CD4-positive, alpha-beta memory T cell (primary cell): ENCODE measurements at regions of chr20 and their contacts with region 1.

Region 1: DNA sequence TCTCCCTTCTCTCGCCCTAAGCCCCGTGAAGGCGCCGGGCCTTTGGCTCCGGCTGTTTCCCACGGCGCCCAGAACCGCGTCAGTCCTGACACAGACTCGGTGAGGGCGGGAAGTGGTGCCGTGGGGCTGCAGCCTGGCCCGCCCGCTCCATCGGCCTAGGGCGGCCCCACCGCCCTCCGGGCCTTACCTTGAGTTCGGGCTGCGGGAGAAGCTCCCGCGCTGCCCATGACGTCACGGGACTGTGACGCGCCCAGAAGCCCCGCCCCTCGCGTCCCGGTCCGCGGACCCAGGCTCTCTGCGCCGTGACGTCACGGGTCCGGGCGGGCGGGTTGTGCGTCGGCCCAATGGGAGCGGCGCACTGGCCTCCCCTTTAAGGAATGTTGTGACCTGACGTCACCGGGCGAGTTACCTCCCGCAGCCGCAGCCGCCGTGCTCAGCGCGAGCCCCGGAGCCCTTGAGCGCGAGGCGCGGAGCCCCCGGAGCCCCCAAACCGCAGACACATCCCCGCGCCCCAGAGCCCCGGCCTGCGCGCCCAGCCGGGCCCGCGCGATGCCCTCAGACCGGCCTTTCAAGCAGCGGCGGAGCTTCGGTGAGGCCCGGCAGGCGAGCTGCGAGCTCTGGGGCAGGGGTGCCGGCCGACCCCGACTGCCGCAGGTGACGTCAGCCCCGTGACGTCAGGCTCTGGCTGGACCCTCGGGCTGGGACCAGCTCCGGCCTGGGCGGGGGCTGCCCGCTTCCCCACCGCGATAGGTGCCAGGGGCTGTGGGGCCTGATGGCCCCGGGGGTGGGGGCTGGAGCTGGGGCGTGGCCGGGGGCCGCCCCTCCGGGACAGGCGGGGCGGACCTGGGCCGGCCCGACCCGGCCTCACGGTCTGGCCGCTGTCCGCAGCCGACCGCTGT is at the start of gene MAP1LC3A:
- DNase-seq: peak; percentile 93 to 96 (median 94)
- H3K4me3 ChIP-seq: peak within 1 kb of the TSS; percentile 45 to 46
- H3K4me3 Mint-ChIP-seq: peak within 1 kb of the TSS; percentile 70 to 93 (median 84)
- H3K27ac ChIP-seq: peak within 1 kb of the TSS; percentile 95
- H3K27ac Mint-ChIP-seq: peak within 1 kb of the TSS; percentile 91 to 100 (median 96)
- H3K4me1 ChIP-seq: peaks cover 12% of the 10 kb centered on the region
- H3K4me1 Mint-ChIP-seq: peaks cover 10 to 33% (median 13%) of the 10 kb centered on the region in 4 donors
- H3K27me3 ChIP-seq: no peaks in the 10 kb centered on the region
- H3K27me3 Mint-ChIP-seq: no peaks in the 10 kb centered on the region
- total RNA-seq, gene MAP1LC3A: 2.1 to 2.8 TPM

Region 2: GRCh38 chr20:34232494-34233087 is 326.0 kb before region 1 on chr20:
- CTCF ChIA-PET with region 1: no interaction called
- POLR2A ChIA-PET with region 1: no interaction called
- intact Hi-C with region 1: no loop called
- DNase-seq: no peak
- H3K4me3 ChIP-seq: no peak overlapping the region
- H3K4me3 Mint-ChIP-seq: no peak overlapping the region
- H3K27ac ChIP-seq: no peak overlapping the region
- H3K27ac Mint-ChIP-seq: no peak overlapping the region
- H3K4me1 ChIP-seq: no peaks in the 10 kb centered on the region
- H3K4me1 Mint-ChIP-seq: no peaks in the 10 kb centered on the region
- H3K27me3 ChIP-seq: no peaks in the 10 kb centered on the region
- H3K27me3 Mint-ChIP-seq: peaks cover 4 to 10% of the 10 kb centered on the region in 2 donors

Region 3: GRCh38 chr20:34302723-34303528 is 255.6 kb before region 1 on chr20 and contains the start of gene AHCY:
- CTCF ChIA-PET with region 1: no interaction called
- POLR2A ChIA-PET with region 1: no interaction called
- intact Hi-C with region 1: loop called (anchors 2 kb)
- DNase-seq: peak; percentile 90 to 95 (median 93)
- H3K4me3 ChIP-seq: peak within 1 kb of the TSS; percentile 86 to 94
- H3K4me3 Mint-ChIP-seq: peak within 1 kb of the TSS; percentile 90 to 98 (median 95)
- H3K27ac ChIP-seq: peak within 1 kb of the TSS; percentile 81
- H3K27ac Mint-ChIP-seq: peak within 1 kb of the TSS; percentile 87 to 98 (median 97)
- H3K4me1 ChIP-seq: peaks cover 11% of the 10 kb centered on the region
- H3K4me1 Mint-ChIP-seq: peaks cover 9 to 26% (median 10%) of the 10 kb centered on the region in 4 donors
- H3K27me3 ChIP-seq: no peaks in the 10 kb centered on the region
- H3K27me3 Mint-ChIP-seq: no peaks in the 10 kb centered on the region
- total RNA-seq, gene AHCY: 23.1 to 24.2 TPM

Region 4: DNA sequence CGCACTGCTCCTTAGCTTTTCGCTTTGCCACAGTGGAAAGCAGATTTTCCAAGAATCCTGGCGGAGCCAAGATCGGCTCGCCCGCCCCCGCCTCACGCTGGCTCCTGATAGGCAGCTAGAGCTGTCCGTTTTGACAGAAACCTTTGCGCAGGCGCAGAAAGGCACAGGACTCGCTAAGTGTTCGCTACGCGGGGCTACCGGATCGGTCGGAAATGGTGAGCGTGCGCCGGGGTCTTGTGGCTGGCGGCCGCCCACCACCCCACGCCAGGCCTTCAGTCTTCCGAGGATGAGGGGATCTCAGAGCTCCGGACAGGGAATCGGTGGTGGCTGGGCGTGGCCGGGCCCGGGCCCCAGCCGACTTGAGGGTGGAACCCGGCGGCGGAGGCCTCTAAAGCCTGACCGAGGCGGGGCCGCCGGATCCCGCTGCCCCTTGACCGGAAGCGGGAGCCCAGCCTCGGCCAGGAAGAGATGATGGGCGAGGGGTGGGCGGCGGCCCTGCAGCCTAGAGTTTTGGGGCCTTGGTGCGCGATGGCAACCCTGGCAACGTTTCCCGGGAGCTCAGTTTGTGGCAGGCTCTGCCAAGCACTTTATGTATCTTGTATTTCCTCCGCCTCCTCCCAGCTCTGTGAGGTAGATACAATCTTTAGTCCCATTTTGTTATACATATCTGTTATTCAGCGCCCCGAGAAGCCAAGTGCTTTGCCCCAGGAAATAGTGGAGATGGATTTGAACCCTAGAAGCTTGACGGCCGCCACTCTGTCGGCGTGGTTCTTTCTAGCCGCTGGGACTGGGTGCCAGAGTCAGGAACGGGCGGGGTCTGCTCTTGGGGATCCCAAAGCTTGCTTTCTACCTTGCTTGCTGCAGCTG is 42.1 kb before region 1 on chr20 and contains the start of gene DYNLRB1:
- CTCF ChIA-PET with region 1: interaction called, 6 read pairs
- POLR2A ChIA-PET with region 1: interaction called, 15 read pairs
- intact Hi-C with region 1: no loop called
- DNase-seq: peak; percentile 92 to 96 (median 93)
- H3K4me3 ChIP-seq: peak within 1 kb of the TSS; percentile 91 to 99
- H3K4me3 Mint-ChIP-seq: peak within 1 kb of the TSS; percentile 93 to 100 (median 98)
- H3K27ac ChIP-seq: peak within 1 kb of the TSS; percentile 89
- H3K27ac Mint-ChIP-seq: peak within 1 kb of the TSS; percentile 96 to 99 (median 98)
- H3K4me1 ChIP-seq: peaks cover 46% of the 10 kb centered on the region
- H3K4me1 Mint-ChIP-seq: peaks cover 29 to 91% (median 52%) of the 10 kb centered on the region in 4 donors
- H3K27me3 ChIP-seq: no peaks in the 10 kb centered on the region
- H3K27me3 Mint-ChIP-seq: no peaks in the 10 kb centered on the region
- total RNA-seq, gene DYNLRB1: 75.5 to 81.0 TPM

Region 5: GRCh38 chr20:34544109-34544793 is 14.3 kb before region 1 on chr20:
- CTCF ChIA-PET with region 1: interaction called, 20 read pairs
- POLR2A ChIA-PET with region 1: interaction called, 5 read pairs
- intact Hi-C with region 1: loop called (anchors 2 kb)
- DNase-seq: no peak
- H3K4me3 ChIP-seq: no peak overlapping the region
- H3K4me3 Mint-ChIP-seq: peak overlapping the region; percentile 31 to 79 (median 66)
- H3K27ac ChIP-seq: no peak overlapping the region
- H3K27ac Mint-ChIP-seq: peak overlapping the region; percentile 23 to 85 (median 70)
- H3K4me1 ChIP-seq: peaks cover 46% of the 10 kb centered on the region
- H3K4me1 Mint-ChIP-seq: peaks cover 22 to 59% (median 40%) of the 10 kb centered on the region in 4 donors
- H3K27me3 ChIP-seq: no peaks in the 10 kb centered on the region
- H3K27me3 Mint-ChIP-seq: no peaks in the 10 kb centered on the region

Region 6: GRCh38 chr20:34704177-34705007 is 145.8 kb after region 1 on chr20 and contains the start of gene TP53INP2:
- CTCF ChIA-PET with region 1: no interaction called
- POLR2A ChIA-PET with region 1: no interaction called
- intact Hi-C with region 1: loop called (anchors 1 kb)
- DNase-seq: peak; percentile 89 to 94 (median 90)
- H3K4me3 ChIP-seq: peak within 1 kb of the TSS; percentile 56 to 64
- H3K4me3 Mint-ChIP-seq: peak within 1 kb of the TSS; percentile 88 to 98 (median 95)
- H3K27ac ChIP-seq: peak within 1 kb of the TSS; percentile 90
- H3K27ac Mint-ChIP-seq: peak within 1 kb of the TSS; percentile 94 to 100 (median 99)
- H3K4me1 ChIP-seq: peaks cover 23% of the 10 kb centered on the region
- H3K4me1 Mint-ChIP-seq: peaks cover 12 to 50% (median 19%) of the 10 kb centered on the region in 4 donors
- H3K27me3 ChIP-seq: no peaks in the 10 kb centered on the region
- H3K27me3 Mint-ChIP-seq: no peaks in the 10 kb centered on the region
- total RNA-seq, gene TP53INP2: 0.86 to 1.2 TPM